ENCODE measurements at regions of chr12 and their contacts with region 1.

Region 1: GRCh38 chr12:120649442-120650232 is 9.2 kb downstream of the CABP1 start:
- DNase-seq: no peak
- ATAC-seq: peak; percentile 13
- H3K4me3 ChIP-seq: peak overlapping the region; percentile 61; the same call in 1 of the 2 replicates
- H3K27ac ChIP-seq: no peak overlapping the region
- H3K4me1 ChIP-seq: peaks cover 19% of the 10 kb centered on the region
- H3K27me3 ChIP-seq: no peaks in the 10 kb centered on the region
- CTCF ChIP-seq: no peak
- EP300 ChIP-seq: no peak
- POLR2A ChIP-seq: no peak
- RAD21 ChIP-seq: no peak

Region 2: DNA sequence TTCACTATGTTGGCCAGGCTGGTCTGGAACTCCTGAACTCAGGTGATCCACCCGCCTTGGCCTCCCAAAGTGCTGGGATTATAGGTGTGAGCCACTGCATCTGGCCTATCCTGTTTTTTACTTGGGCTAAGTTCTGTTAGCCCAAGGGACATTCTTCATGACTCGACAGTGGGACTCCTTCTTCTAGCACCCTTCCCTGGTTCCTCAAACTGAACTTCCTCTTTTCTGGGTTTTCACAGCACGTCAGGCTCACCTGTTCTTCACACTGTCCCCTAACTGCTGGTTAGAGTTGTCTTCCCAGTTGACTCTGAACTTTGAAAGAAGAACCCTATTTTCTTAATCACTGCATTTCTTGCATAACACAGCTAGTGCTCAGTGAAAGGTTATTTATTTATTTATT is 13.2 kb after region 1 on chr12:
- CTCF ChIA-PET with region 1: interaction called, 184 read pairs
- POLR2A ChIA-PET with region 1: interaction called, 23 read pairs
- RAD21 ChIA-PET with region 1: interaction called, 50 read pairs
- SMC1A ChIA-PET with region 1: interaction called, 146 read pairs
- in situ Hi-C with region 1: no loop called
- intact Hi-C with region 1: no loop called
- DNase-seq: peak; percentile 67
- ATAC-seq: peak; percentile 95
- H3K4me3 ChIP-seq: no peak overlapping the region
- H3K27ac ChIP-seq: no peak overlapping the region
- H3K4me1 ChIP-seq: peaks cover 9% of the 10 kb centered on the region
- H3K27me3 ChIP-seq: no peaks in the 10 kb centered on the region
- CTCF ChIP-seq: no peak
- EP300 ChIP-seq: 0 out of 4 replicates have a peak, but pooled peaks of 1 of the 2 experiments have one; percentile 59
- POLR2A ChIP-seq: no peak
- RAD21 ChIP-seq: 0 out of 2 replicates have a peak, but pooled peaks have one; percentile 4

Region 3: GRCh38 chr12:120677765-120678473 is 28.3 kb after region 1 on chr12:
- CTCF ChIA-PET with region 1: interaction called, 454 read pairs
- POLR2A ChIA-PET with region 1: interaction called, 46 read pairs
- RAD21 ChIA-PET with region 1: interaction called, 144 read pairs
- SMC1A ChIA-PET with region 1: interaction called, 167 read pairs
- in situ Hi-C with region 1: no loop called
- intact Hi-C with region 1: no loop called
- DNase-seq: peak; percentile 82
- ATAC-seq: peak; percentile 89
- H3K4me3 ChIP-seq: no peak overlapping the region
- H3K27ac ChIP-seq: peak overlapping the region; percentile 86
- H3K4me1 ChIP-seq: peaks cover 50% of the 10 kb centered on the region
- H3K27me3 ChIP-seq: no peaks in the 10 kb centered on the region
- CTCF ChIP-seq: no peak
- EP300 ChIP-seq: peak; percentile 12 to 24; a peak in 1 of 4 replicates
- POLR2A ChIP-seq: peak; percentile 38; the same call in 1 of the 2 replicates
- RAD21 ChIP-seq: no peak

Region 4: GRCh38 chr12:120698665-120699064 is 49.0 kb after region 1 on chr12:
- CTCF ChIA-PET with region 1: interaction called, 454 read pairs
- POLR2A ChIA-PET with region 1: interaction called, 3 read pairs
- RAD21 ChIA-PET with region 1: interaction called, 7 read pairs
- SMC1A ChIA-PET with region 1: interaction called, 9 read pairs
- in situ Hi-C with region 1: no loop called
- intact Hi-C with region 1: no loop called
- DNase-seq: no peak
- ATAC-seq: no peak
- H3K4me3 ChIP-seq: no peak overlapping the region
- H3K27ac ChIP-seq: no peak overlapping the region
- H3K4me1 ChIP-seq: no peaks in the 10 kb centered on the region
- H3K27me3 ChIP-seq: no peaks in the 10 kb centered on the region
- CTCF ChIP-seq: no peak
- EP300 ChIP-seq: no peak
- POLR2A ChIP-seq: no peak
- RAD21 ChIP-seq: no peak

Region 5: DNA sequence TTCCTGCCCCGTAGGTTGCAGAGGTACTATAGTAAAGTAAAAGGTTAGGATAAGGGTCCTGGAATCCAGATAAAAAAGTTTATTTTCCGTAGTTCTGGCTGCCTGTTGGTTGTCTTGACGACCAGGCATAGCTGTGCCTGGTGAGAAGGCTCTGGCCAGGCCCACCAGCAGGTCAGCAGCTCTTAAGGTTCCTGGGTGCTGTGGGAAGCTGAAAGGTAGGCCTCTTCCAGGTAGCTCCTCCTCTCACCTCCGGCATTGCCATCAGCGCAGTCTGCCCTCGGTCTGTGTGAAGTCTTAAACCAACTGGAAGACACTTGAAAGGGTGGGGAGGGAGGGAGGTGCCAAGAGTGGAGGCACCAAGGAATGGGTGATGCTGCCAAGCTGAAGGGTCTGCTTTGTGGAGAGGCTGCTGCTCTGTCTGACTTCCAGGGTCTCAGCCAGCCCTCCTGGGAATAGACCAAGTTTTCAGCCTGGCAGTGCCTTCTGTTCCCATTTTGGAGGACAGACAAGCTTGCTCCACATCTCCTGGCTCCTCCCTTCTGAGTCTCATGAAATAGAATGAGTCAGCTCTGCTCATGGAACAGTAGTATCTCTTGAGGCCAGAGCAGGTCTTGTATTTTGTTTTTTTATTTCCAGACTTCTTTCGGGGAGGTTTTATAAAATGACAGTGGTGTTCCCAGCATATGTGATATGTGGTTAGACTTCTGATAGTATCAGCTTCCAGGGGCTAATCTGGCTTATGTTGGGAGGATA is 70.8 kb after region 1 on chr12:
- CTCF ChIA-PET with region 1: interaction called, 13 read pairs
- POLR2A ChIA-PET with region 1: no interaction called
- RAD21 ChIA-PET with region 1: interaction called, 9 read pairs
- SMC1A ChIA-PET with region 1: interaction called, 43 read pairs
- in situ Hi-C with region 1: no loop called
- intact Hi-C with region 1: no loop called
- DNase-seq: no peak
- ATAC-seq: no peak
- H3K4me3 ChIP-seq: no peak overlapping the region
- H3K27ac ChIP-seq: no peak overlapping the region
- H3K4me1 ChIP-seq: peaks cover 16% of the 10 kb centered on the region
- H3K27me3 ChIP-seq: no peaks in the 10 kb centered on the region
- CTCF ChIP-seq: no peak
- EP300 ChIP-seq: no peak
- POLR2A ChIP-seq: no peak
- RAD21 ChIP-seq: no peak

Region 6: GRCh38 chr12:120797677-120798642 is 148.3 kb after region 1 on chr12:
- CTCF ChIA-PET with region 1: interaction called, 10 read pairs
- POLR2A ChIA-PET with region 1: no interaction called
- RAD21 ChIA-PET with region 1: interaction called, 3 read pairs
- SMC1A ChIA-PET with region 1: interaction called, 3 read pairs
- in situ Hi-C with region 1: no loop called
- intact Hi-C with region 1: no loop called
- DNase-seq: peak; percentile 51
- ATAC-seq: peak; percentile 66
- H3K4me3 ChIP-seq: peak overlapping the region; percentile 35
- H3K27ac ChIP-seq: peak overlapping the region; percentile 76
- H3K4me1 ChIP-seq: peaks cover 46% of the 10 kb centered on the region
- H3K27me3 ChIP-seq: no peaks in the 10 kb centered on the region
- CTCF ChIP-seq: 0 out of 6 replicates have a peak, but pooled peaks of 2 of the 3 experiments have one; percentile 1 to 5
- EP300 ChIP-seq: no peak
- POLR2A ChIP-seq: no peak
- RAD21 ChIP-seq: peak; percentile 32; the same call in 1 of the 2 replicates

Region 7: GRCh38 chr12:121110211-121110940 is 460.7 kb after region 1 on chr12:
- CTCF ChIA-PET with region 1: interaction called, 4 read pairs
- POLR2A ChIA-PET with region 1: interaction called, 5 read pairs
- RAD21 ChIA-PET with region 1: no interaction called
- SMC1A ChIA-PET with region 1: interaction called, 3 read pairs
- in situ Hi-C with region 1: no loop called
- intact Hi-C with region 1: loop called (anchors 5 kb)
- DNase-seq: peak; percentile 78
- ATAC-seq: peak; percentile 95
- H3K4me3 ChIP-seq: no peak overlapping the region
- H3K27ac ChIP-seq: no peak overlapping the region
- H3K4me1 ChIP-seq: 0 out of 2 replicates have a peak, but pooled peaks cover 2% of the 10 kb centered on the region
- H3K27me3 ChIP-seq: no peaks in the 10 kb centered on the region
- CTCF ChIP-seq: peak; percentile 86 to 96 (median 94); a peak in 5 of 6 replicates
- EP300 ChIP-seq: peak; percentile 44 to 82; a peak in 1 of 4 replicates
- POLR2A ChIP-seq: no peak
- RAD21 ChIP-seq: peak; percentile 93